CD8-positive, alpha-beta T cell (primary cell): ENCODE measurements at regions of chr7 and their contacts with region 1.

Region 1: DNA sequence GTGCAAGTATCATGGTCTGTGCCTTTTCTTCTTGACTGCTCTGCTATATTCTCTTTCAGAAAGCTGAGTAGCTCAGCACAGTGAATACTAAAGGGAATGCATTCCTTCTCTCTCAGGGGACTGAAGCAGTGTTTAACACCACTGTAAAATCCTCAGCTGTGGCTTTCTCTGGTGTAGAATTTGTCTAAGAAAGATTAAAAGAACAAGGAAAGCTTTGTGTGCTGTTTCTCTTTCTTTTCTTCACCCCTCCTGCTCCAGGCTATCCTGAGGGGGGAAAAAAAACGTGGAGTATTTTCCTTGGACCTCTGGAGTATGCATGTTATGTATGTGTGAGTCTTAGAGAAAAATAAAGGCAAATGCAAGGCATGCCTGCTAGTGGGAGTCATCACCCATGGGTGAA is 383.9 kb downstream of the AUTS2 start:
- DNase-seq: no peak
- ATAC-seq: no peak
- H3K4me3 ChIP-seq: no peak overlapping the region
- H3K4me3 Mint-ChIP-seq: no peak overlapping the region
- H3K27ac ChIP-seq: no peak overlapping the region
- H3K27ac Mint-ChIP-seq: no peak overlapping the region
- H3K4me1 ChIP-seq: no peaks in the 10 kb centered on the region
- H3K4me1 Mint-ChIP-seq: no peaks in the 10 kb centered on the region
- H3K27me3 ChIP-seq: no peaks in the 10 kb centered on the region
- H3K27me3 Mint-ChIP-seq: peaks cover 8% of the 10 kb centered on the region
- CTCF ChIP-seq: no peak

Region 2: GRCh38 chr7:70040970-70041766 is 59.0 kb after region 1 on chr7:
- CTCF ChIA-PET with region 1: no interaction called
- POLR2A ChIA-PET with region 1: no interaction called
- intact Hi-C with region 1: loop called in 1 of 2 experiments (anchors 10 kb)
- DNase-seq: peak in 1 of 9 experiments; percentile 5
- ATAC-seq: no peak
- H3K4me3 ChIP-seq: no peak overlapping the region
- H3K4me3 Mint-ChIP-seq: no peak overlapping the region
- H3K27ac ChIP-seq: no peak overlapping the region
- H3K27ac Mint-ChIP-seq: no peak overlapping the region
- H3K4me1 ChIP-seq: no peaks in the 10 kb centered on the region
- H3K4me1 Mint-ChIP-seq: no peaks in the 10 kb centered on the region
- H3K27me3 ChIP-seq: no peaks in the 10 kb centered on the region
- H3K27me3 Mint-ChIP-seq: no peaks in the 10 kb centered on the region
- CTCF ChIP-seq: no peak